ENCODE measurements at regions of chr19 and their contacts with region 1.

Region 1: DNA sequence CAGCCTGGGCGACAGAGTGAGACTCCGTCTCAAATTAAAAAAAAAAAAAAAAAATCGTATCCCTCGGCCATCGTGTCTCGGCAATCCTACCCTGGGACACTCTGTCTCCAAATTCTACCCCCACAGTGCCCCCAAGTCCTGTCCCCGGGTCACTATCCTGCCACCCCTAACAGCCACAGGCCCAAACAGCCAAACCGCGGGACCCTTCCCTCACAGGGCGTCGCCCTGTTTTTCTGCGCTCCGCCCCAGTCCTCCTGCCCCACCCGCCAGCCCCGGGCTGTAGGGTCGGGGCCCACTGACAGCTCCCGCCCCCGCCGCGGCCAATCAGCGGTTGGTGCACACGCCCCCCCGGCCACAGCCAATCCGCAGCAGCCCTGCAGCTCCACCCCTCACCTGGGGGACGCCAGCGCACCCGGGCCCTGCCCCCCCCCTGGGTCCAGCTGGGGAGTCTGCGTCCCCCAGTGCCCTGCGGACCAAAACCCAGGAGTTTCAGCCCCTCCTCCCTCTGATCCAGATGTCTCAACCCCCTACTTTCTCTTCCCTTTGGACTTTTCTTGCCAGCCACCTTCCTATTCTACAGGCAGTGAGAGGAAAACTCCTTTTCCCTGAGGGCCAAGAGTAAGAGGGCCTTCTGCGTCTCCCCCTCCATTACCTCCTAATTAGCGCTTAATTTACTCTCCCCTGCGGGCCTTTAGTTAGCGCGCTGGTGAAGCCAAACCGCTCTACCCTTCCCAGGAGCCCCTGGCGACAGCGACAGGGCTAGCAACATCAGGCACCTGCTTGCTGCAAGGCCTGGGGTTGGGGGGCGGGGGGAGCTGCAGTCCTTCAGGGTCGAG is 1.5 kb upstream of the BCAT2 start:
- DNase-seq: peak; percentile 92
- ATAC-seq: peak; percentile 73
- H3K4me3 Mint-ChIP-seq: peak overlapping the region; percentile 69
- H3K27ac Mint-ChIP-seq: peak overlapping the region; percentile 98
- H3K4me1 Mint-ChIP-seq: peaks cover 36% of the 10 kb centered on the region
- H3K27me3 Mint-ChIP-seq: peaks cover 30% of the 10 kb centered on the region
- CTCF ChIP-seq: no peak

Region 2: DNA sequence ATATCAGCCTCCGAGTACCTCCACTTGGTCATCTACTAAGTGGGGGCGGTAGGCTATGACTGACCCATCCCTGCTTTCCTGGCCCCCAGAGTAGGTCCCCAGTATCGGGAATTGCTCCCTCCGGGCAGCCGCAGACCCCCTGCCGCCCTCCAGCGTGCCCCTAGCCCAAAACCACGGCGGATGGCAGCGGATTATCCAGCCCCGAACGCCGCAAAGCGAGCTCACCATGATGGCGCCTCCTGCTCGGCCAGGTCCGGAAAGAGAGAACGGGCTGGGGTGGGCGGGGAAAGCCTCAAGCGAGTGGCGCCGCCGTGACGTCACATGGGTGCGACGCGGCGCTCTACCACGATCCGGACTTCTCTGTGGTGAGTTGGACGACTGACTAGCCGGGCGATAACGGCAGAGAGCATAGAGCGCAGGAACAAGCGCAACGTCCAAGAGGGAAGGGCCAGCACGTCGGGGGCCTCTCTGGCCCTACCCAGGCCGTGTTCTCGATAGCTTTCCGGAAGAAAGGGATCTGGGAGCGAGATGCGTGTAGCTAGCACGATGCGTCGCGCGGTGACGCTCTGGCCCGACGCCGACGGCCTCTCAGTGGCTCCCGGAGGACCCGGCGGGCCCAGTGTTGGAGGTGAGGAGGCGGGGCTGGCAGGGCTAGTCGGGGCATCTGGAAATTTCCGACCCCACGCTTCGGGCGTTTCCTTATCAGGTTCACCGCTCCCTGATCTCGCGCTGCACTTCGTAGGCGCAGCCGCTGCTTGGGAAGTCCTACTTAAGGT is 193.2 kb before region 1 on chr19 and contains the starts of genes RPL18 and SPHK2:
- CTCF ChIA-PET with region 1: no interaction called
- POLR2A ChIA-PET with region 1: no interaction called
- DNase-seq: peak; percentile 96
- ATAC-seq: peak; percentile 65
- H3K4me3 Mint-ChIP-seq: peak within 1 kb of the TSS; percentile 99
- H3K27ac Mint-ChIP-seq: peak within 1 kb of the TSS; percentile 100
- H3K4me1 Mint-ChIP-seq: peaks cover 60% of the 10 kb centered on the region
- H3K27me3 Mint-ChIP-seq: no peaks in the 10 kb centered on the region; the same call in 1 of the 2 replicates
- CTCF ChIP-seq: no peak
- total RNA-seq, gene RPL18: 1,712 to 1,987 TPM (median 1,909 TPM) in 3 replicates
- total RNA-seq, gene SPHK2: 46.7 to 64.6 TPM (median 48.4 TPM) in 3 replicates

Region 3: DNA sequence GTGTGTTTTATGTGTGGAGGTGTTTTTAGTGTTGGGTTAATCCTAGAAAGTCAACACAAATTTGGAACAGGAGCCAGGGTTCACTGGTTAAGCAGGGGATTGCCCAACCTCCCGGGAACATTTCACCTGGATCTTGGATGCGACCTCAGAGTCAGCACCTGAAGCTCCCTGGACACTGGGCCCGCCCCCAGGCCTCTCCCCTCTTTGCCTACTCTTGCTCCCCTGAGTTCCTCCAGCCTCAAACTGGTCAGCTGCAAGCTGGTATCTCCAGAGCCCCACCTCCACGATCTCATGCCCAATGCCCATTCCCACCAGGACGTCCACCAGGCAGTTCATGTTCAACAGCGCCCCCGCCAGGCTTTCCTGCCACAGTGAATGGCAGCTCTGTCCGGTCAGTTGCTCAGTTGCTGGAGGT is 14.3 kb after region 1 on chr19:
- CTCF ChIA-PET with region 1: interaction called, 30 read pairs
- POLR2A ChIA-PET with region 1: interaction called, 3 read pairs
- DNase-seq: peak; percentile 75
- ATAC-seq: peak; percentile 75
- H3K4me3 Mint-ChIP-seq: no peak overlapping the region
- H3K27ac Mint-ChIP-seq: no peak overlapping the region
- H3K4me1 Mint-ChIP-seq: no peaks in the 10 kb centered on the region
- H3K27me3 Mint-ChIP-seq: no peaks in the 10 kb centered on the region; the same call in 1 of the 2 replicates
- CTCF ChIP-seq: peak; percentile 43

Region 4: DNA sequence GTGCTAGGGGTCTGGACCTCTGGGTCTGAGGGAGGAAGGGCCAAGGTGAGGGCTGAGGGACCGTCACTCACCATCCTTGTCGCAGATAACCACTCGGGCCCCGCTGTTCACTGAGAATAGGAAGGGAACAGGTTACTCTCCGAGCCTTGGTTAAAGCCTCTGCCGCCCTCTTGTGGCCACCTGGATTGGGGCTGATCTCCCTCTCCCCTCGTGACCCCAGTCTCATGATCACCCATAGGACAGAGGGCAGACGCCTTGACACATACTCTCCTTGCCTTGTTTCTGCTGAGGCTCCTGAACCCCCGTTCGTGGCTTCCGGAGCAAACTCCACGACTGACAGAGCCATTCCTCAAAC is 23.4 kb after region 1 on chr19:
- CTCF ChIA-PET with region 1: interaction called, 38 read pairs
- POLR2A ChIA-PET with region 1: interaction called, 7 read pairs
- DNase-seq: peak; percentile 98
- ATAC-seq: peak; percentile 68
- H3K4me3 Mint-ChIP-seq: peak overlapping the region; percentile 94
- H3K27ac Mint-ChIP-seq: peak overlapping the region; percentile 98
- H3K4me1 Mint-ChIP-seq: peaks cover 19% of the 10 kb centered on the region
- H3K27me3 Mint-ChIP-seq: no peaks in the 10 kb centered on the region
- CTCF ChIP-seq: peak; percentile 84

Region 5: DNA sequence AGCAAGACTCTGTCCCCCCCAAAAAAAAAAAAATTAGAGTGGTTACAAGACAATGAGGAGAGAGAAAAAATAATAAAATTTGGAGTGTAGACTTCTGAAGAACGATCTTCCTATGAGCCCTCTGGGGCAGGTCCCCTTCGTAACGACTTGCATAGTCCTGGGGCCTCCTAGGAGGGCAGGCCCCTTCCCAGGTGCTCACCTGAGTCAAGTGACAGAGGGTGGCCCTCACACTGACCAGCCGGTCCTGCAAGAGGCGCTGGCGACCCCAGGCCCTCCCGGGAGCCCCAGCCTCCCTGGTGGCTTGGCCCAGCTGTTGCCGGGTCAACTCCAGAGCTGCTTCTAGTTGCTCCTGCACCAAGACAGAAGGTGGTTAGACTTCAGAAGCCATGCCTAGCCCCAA is 41.2 kb after region 1 on chr19:
- CTCF ChIA-PET with region 1: no interaction called
- POLR2A ChIA-PET with region 1: no interaction called
- DNase-seq: no peak
- ATAC-seq: no peak
- H3K4me3 Mint-ChIP-seq: no peak overlapping the region
- H3K27ac Mint-ChIP-seq: no peak overlapping the region
- H3K4me1 Mint-ChIP-seq: no peaks in the 10 kb centered on the region
- H3K27me3 Mint-ChIP-seq: no peaks in the 10 kb centered on the region
- CTCF ChIP-seq: no peak